Activated CD4-positive, alpha-beta memory T cell treated with anti-CD3 and anti-CD28 coated beads for 36 hours (primary cell): ENCODE measurements at regions of chr9 and their contacts with region 1.

Region 1: DNA sequence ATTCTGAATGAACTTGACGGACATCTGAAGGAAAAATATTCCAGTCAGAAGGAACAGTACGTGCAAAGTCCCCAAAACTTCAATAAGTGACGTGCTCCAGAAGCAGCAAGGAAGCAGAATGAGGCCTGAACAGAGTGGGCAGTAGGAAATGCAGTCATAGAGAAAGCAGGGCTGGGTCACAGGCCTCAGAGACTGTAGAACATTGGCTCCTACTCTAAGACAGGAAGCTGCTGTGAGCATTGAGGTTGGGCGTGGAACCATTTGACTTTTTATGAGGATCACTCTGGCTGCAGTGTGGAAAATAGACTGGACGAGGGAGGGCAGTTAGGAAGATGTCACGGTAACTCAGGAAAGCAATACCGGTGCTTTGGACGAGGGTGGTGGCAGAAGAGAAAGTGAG is 64.0 kb downstream of the DOCK8 start:
- DNase-seq: peak; percentile 82
- H3K4me3 Mint-ChIP-seq: no peak overlapping the region
- H3K27ac Mint-ChIP-seq: no peak overlapping the region
- H3K4me1 Mint-ChIP-seq: peaks cover 40% of the 10 kb centered on the region
- H3K27me3 Mint-ChIP-seq: no peaks in the 10 kb centered on the region

Region 2: DNA sequence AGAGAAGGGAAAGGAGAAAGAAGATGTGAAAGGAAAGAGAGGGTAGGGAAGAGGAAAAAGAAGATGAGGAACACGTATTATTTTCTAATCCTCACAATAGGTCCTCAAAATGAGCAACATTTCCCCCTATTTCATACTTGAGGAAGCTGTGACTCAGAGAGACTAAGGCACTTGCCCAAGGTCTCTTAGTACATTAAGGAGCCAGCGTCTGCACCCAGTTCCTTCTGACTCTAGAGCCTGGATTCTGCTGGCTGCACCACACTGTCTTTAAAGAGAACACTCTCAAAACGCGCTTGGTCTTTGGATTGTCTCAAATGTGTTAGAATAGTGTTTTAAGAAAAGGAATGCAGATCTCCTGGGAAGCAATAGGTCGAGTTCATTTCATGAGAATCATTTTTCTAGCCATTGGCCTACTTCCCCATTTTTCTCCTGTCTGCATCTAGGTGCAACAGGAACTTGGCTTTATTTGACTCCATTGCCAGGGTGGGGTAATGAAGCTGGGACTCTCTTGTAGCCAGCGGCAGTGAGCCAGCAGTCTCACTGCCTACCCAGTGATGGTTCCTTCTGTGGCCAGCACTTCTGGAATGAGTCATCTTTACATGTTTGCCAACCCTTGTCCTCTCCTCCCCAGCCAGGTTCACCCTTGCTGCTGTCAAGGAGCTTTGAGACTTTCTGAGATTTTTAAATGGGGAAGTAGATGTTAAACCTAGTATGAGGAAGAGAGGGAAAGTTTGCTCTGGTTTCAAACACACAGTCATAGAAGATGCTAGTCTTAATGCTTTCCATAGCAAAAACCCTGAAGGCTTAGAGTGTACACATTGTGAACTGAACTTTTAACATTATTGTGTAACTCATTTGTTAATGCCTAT is 18.7 kb after region 1 on chr9:
- CTCF ChIA-PET with region 1: interaction called, 5 read pairs
- POLR2A ChIA-PET with region 1: interaction called, 4 read pairs
- intact Hi-C with region 1: loop called (anchors 1 kb)
- DNase-seq: peak; percentile 45
- H3K4me3 Mint-ChIP-seq: peak overlapping the region; percentile 17
- H3K27ac Mint-ChIP-seq: peak overlapping the region; percentile 64
- H3K4me1 Mint-ChIP-seq: peaks cover 50% of the 10 kb centered on the region
- H3K27me3 Mint-ChIP-seq: no peaks in the 10 kb centered on the region